ENCODE measurements at regions of chr16 and their contacts with region 1.

Region 1: DNA sequence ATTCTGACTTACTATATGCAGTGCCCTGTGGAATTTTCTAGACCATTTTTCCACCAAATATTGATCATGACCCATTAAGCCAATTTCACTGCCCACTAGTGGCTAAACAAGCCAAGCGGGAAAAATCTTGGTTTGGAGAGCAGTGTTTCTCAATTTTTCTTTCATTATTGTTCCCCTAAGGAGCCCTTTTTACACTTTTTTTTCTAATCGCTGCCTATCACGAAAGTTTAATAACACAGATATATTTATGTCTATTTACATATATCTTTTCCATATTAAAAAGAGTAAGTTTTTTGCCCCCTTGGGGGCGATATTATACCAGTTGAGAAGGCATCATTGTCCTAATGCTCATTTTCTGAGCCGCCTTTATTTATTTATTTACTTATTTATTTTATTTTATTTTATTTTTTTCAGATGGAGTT is 10.8 kb upstream of the TLCD3B start:
- DNase-seq: peak in 1 of 4 donors; percentile 13
- ATAC-seq: peak; percentile 55
- H3K4me3 ChIP-seq: no peak overlapping the region
- H3K27ac ChIP-seq: no peak overlapping the region
- H3K4me1 ChIP-seq: no peaks in the 10 kb centered on the region
- H3K27me3 ChIP-seq: no peaks in the 10 kb centered on the region
- CTCF ChIP-seq: peak in 6 of 7 experiments; percentile 38 to 66 (median 54)
- POLR2A ChIP-seq: no peak

Region 2: GRCh38 chr16:30628627-30629540 is 587.0 kb after region 1 on chr16:
- intact Hi-C with region 1: loop called (anchors 10 kb)
- DNase-seq: peak; percentile 85 to 91 (median 87)
- ATAC-seq: peak; percentile 94
- H3K4me3 ChIP-seq: no peak overlapping the region
- H3K27ac ChIP-seq: peak overlapping the region in 2 of 4 donors; percentile 19 to 48
- H3K4me1 ChIP-seq: peaks cover 5% of the 10 kb centered on the region
- H3K27me3 ChIP-seq: no peaks in the 10 kb centered on the region
- CTCF ChIP-seq: peak; percentile 41 to 87 (median 79)
- POLR2A ChIP-seq: no peak